ENCODE measurements at regions of chr6 and their contacts with region 1.

Region 1: DNA sequence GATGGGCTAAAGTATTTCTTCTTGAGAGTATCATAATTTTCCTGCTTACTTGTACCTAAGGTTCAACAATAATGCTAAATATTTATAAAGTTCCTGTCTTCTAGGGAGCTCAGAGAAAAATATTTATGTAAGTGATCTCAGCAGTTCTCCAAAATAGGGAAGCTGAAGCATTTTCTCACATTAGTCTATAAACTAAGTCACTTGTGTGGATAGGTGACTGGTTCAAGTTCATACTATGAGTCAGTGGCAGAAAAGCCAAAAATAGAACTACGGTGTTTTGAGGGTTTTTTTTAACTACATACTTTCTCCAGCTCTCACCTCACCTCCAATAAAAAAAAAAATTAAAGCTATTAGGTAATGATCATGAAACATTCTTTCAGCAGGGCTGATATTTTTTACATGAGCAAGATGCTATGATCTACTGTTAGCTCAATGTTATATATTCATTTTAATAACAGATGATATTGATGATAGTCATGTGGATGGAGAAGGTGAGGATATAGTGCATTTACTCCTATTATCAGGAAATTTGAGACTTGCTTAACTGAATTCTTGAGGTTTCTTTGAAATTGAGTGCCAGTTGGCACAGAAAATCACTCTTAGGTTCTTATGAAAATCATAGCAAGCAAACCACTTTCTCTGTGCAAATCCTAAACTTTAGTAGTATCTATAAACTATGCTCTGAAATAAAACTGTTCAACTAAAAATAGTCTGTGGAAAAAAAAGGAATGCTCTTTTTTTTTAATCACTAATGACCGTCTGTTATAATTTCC is 4.1 kb upstream of the MOXD1 start:
- DNase-seq: no peak
- H3K4me3 ChIP-seq: no peak overlapping the region
- H3K27ac ChIP-seq: no peak overlapping the region
- H3K4me1 ChIP-seq: no peaks in the 10 kb centered on the region; a peak in 2 of 7 replicates
- H3K27me3 ChIP-seq: peaks cover 4 to 31% (median 24%) of the 10 kb centered on the region in 4 experiments
- CTCF ChIP-seq: no peak
- EP300 ChIP-seq: no peak
- POLR2A ChIP-seq: no peak
- RAD21 ChIP-seq: no peak

Region 2: GRCh38 chr6:131858765-131859415 is 546.4 kb before region 1 on chr6:
- CTCF ChIA-PET with region 1: no interaction called
- POLR2A ChIA-PET with region 1: no interaction called
- DNase-seq: no peak
- H3K4me3 ChIP-seq: no peak overlapping the region
- H3K27ac ChIP-seq: no peak overlapping the region
- H3K4me1 ChIP-seq: peaks cover 0 to 4% (median 2%) of the 10 kb centered on the region in 4 experiments; a peak in 2 of 7 replicates
- H3K27me3 ChIP-seq: no peaks in the 10 kb centered on the region
- CTCF ChIP-seq: no peak
- EP300 ChIP-seq: no peak
- POLR2A ChIP-seq: no peak
- RAD21 ChIP-seq: no peak

Region 3: GRCh38 chr6:132391391-132392271 is 13.7 kb before region 1 on chr6:
- CTCF ChIA-PET with region 1: interaction called, 16 read pairs
- POLR2A ChIA-PET with region 1: interaction called, 3 read pairs
- DNase-seq: no peak
- H3K4me3 ChIP-seq: no peak overlapping the region
- H3K27ac ChIP-seq: no peak overlapping the region
- H3K4me1 ChIP-seq: peaks cover 4 to 11% (median 10%) of the 10 kb centered on the region in 4 experiments; a peak in 4 of 7 replicates
- H3K27me3 ChIP-seq: no peaks in the 10 kb centered on the region
- CTCF ChIP-seq: no peak
- EP300 ChIP-seq: no peak
- POLR2A ChIP-seq: no peak
- RAD21 ChIP-seq: no peak

Region 4: GRCh38 chr6:132648356-132649227 is 243.3 kb after region 1 on chr6:
- CTCF ChIA-PET with region 1: no interaction called
- POLR2A ChIA-PET with region 1: no interaction called
- DNase-seq: no peak
- H3K4me3 ChIP-seq: no peak overlapping the region
- H3K27ac ChIP-seq: no peak overlapping the region
- H3K4me1 ChIP-seq: no peaks in the 10 kb centered on the region
- H3K27me3 ChIP-seq: no peaks in the 10 kb centered on the region
- CTCF ChIP-seq: no peak
- EP300 ChIP-seq: no peak
- POLR2A ChIP-seq: no peak
- RAD21 ChIP-seq: no peak